B cell (primary cell): ENCODE measurements at regions of chr11 and their contacts with region 1.

Region 1: GRCh38 chr11:86244522-86245368 is at the start of gene EED:
- DNase-seq: peak; percentile 97
- ATAC-seq: peak; percentile 87
- H3K4me3 ChIP-seq: peak within 1 kb of the TSS; percentile 98 to 100 (median 100)
- H3K4me3 Mint-ChIP-seq: no peak within 1 kb of the TSS
- H3K27ac ChIP-seq: peak within 1 kb of the TSS; percentile 98 to 99
- H3K27ac Mint-ChIP-seq: no peak within 1 kb of the TSS
- H3K4me1 ChIP-seq: peaks cover 27 to 34% of the 10 kb centered on the region in 2 donors
- H3K4me1 Mint-ChIP-seq: peaks cover 23% of the 10 kb centered on the region
- H3K27me3 ChIP-seq: no peaks in the 10 kb centered on the region
- H3K27me3 Mint-ChIP-seq: no peaks in the 10 kb centered on the region
- CTCF ChIP-seq: no peak
- total RNA-seq, gene EED: 49.5 and 58.3 TPM in 2 replicates

Region 2: DNA sequence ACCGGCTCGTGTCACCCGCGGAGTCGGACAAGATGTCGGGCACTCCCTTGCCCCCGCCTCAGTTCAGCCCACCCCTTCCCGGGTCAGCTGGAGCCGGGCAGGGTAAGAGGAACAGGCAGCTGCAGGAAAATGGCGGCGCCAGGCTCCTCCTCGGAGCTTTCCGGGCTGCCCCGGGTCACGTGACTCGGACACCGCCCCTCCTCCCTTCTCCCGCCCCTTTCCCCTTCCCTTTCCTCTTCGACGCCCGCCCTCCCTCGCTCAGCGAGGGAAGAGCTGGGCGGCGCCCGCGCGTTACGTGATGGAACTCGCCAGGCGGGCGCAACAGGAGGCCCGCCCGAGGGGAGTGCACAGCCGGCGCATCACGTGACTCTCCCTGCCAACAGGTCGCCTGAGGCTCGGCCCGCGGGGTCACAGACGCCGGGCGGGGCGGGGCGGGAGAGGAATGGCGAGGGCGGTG is 175.8 kb before region 1 on chr11 and contains the start of gene PICALM:
- CTCF ChIA-PET with region 1: interaction called, 11 read pairs
- POLR2A ChIA-PET with region 1: interaction called, 28 read pairs
- intact Hi-C with region 1: loop called (anchors 1 kb)
- DNase-seq: peak; percentile 98
- ATAC-seq: peak; percentile 82
- H3K4me3 ChIP-seq: peak within 1 kb of the TSS; percentile 76 to 93 (median 86)
- H3K4me3 Mint-ChIP-seq: peak within 1 kb of the TSS; percentile 100
- H3K27ac ChIP-seq: peak within 1 kb of the TSS; percentile 88 to 95
- H3K27ac Mint-ChIP-seq: peak within 1 kb of the TSS; percentile 99
- H3K4me1 ChIP-seq: peaks cover 31% of the 10 kb centered on the region in 2 donors
- H3K4me1 Mint-ChIP-seq: peaks cover 42% of the 10 kb centered on the region
- H3K27me3 ChIP-seq: no peaks in the 10 kb centered on the region
- H3K27me3 Mint-ChIP-seq: no peaks in the 10 kb centered on the region
- CTCF ChIP-seq: no peak
- total RNA-seq, gene PICALM: 165 and 178 TPM in 2 replicates

Region 3: GRCh38 chr11:86202013-86202336 is 42.8 kb before region 1 on chr11:
- CTCF ChIA-PET with region 1: interaction called, 5 read pairs
- POLR2A ChIA-PET with region 1: interaction called, 3 read pairs
- intact Hi-C with region 1: loop called (anchors 2 kb)
- DNase-seq: no peak
- ATAC-seq: peak; percentile 46
- H3K4me3 ChIP-seq: peak overlapping the region; percentile 44 to 88 (median 61)
- H3K4me3 Mint-ChIP-seq: no peak overlapping the region
- H3K27ac ChIP-seq: peak overlapping the region; percentile 59 to 68
- H3K27ac Mint-ChIP-seq: no peak overlapping the region
- H3K4me1 ChIP-seq: peaks cover 22 to 32% of the 10 kb centered on the region in 2 donors
- H3K4me1 Mint-ChIP-seq: peaks cover 8% of the 10 kb centered on the region
- H3K27me3 ChIP-seq: no peaks in the 10 kb centered on the region
- H3K27me3 Mint-ChIP-seq: no peaks in the 10 kb centered on the region
- CTCF ChIP-seq: no peak

Region 4: GRCh38 chr11:86291466-86292262 is 46.9 kb after region 1 on chr11:
- CTCF ChIA-PET with region 1: interaction called, 7 read pairs
- POLR2A ChIA-PET with region 1: no interaction called
- intact Hi-C with region 1: loop called (anchors 5 kb)
- DNase-seq: peak; percentile 71
- ATAC-seq: peak; percentile 62
- H3K4me3 ChIP-seq: no peak overlapping the region
- H3K4me3 Mint-ChIP-seq: no peak overlapping the region
- H3K27ac ChIP-seq: no peak overlapping the region
- H3K27ac Mint-ChIP-seq: no peak overlapping the region
- H3K4me1 ChIP-seq: peaks cover 16 to 26% of the 10 kb centered on the region in 2 donors
- H3K4me1 Mint-ChIP-seq: peaks cover 26% of the 10 kb centered on the region
- H3K27me3 ChIP-seq: no peaks in the 10 kb centered on the region
- H3K27me3 Mint-ChIP-seq: no peaks in the 10 kb centered on the region
- CTCF ChIP-seq: peak; percentile 86